HEK293 (cell line): ENCODE measurements at regions of chr14 and their contacts with region 1.

Region 1: GRCh38 chr14:61761959-61762786 is at the start of gene SNAPC1:
- H3K4me3 ChIP-seq: peak within 1 kb of the TSS; percentile 78
- H3K27ac ChIP-seq: peak within 1 kb of the TSS; percentile 68
- H3K4me1 ChIP-seq: peaks cover 12% of the 10 kb centered on the region
- CTCF ChIP-seq: no peak

Region 2: DNA sequence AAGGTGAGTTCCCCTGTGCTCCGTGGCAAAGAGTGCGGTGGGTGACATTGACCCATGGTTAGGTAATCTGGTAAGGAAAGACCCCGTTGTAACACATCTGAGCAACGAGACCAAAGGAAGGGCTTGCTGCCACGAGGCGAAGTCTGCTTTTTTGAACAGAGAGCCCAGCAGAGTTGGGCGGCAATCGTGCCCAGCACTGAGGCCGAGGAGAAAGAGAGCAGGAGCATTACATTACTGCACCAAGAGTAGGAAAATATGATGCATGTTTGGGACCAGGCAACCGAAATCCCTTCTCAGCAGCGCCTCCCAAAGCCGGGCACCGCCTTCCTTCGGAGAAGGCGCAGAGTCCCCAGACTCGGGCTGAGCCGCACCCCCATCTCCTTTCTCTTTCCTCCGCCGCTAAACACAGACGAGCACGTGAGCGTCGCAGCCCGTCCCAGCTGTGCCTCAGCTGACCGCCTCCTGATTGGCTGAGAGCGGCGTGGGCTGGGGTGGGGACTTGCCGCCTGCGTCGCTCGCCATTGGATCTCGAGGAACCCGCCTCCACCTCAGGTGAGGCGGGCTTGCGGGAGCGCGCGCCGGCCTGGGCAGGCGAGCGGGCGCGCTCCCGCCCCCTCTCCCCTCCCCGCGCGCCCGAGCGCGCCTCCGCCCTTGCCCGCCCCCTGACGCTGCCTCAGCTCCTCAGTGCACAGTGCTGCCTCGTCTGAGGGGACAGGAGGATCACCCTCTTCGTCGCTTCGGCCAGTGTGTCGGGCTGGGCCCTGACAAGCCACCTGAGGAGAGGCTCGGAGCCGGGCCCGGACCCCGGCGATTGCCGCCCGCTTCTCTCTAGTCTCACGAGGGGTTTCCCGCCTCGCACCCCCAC is 67.1 kb before region 1 on chr14 and contains the start of gene HIF1A:
- CTCF ChIA-PET with region 1: no interaction called
- POLR2A ChIA-PET with region 1: interaction called, 17 read pairs
- H3K4me3 ChIP-seq: peak within 1 kb of the TSS; percentile 93
- H3K27ac ChIP-seq: peak within 1 kb of the TSS; percentile 98
- H3K4me1 ChIP-seq: peaks cover 12% of the 10 kb centered on the region; the same call in 1 of the 2 replicates
- CTCF ChIP-seq: peak; percentile 62; the same call in 1 of the 2 replicates

Region 3: GRCh38 chr14:61750708-61751474 is 11.3 kb before region 1 on chr14:
- CTCF ChIA-PET with region 1: no interaction called
- POLR2A ChIA-PET with region 1: interaction called, 56 read pairs
- H3K4me3 ChIP-seq: peak overlapping the region; percentile 49
- H3K27ac ChIP-seq: peak overlapping the region; percentile 47; the same call in 1 of the 2 replicates
- H3K4me1 ChIP-seq: peaks cover 26% of the 10 kb centered on the region
- CTCF ChIP-seq: no peak

Region 4: GRCh38 chr14:61822458-61822857 is 60.3 kb after region 1 on chr14:
- CTCF ChIA-PET with region 1: no interaction called
- POLR2A ChIA-PET with region 1: no interaction called
- H3K4me3 ChIP-seq: no peak overlapping the region
- H3K27ac ChIP-seq: no peak overlapping the region
- H3K4me1 ChIP-seq: no peaks in the 10 kb centered on the region
- CTCF ChIP-seq: no peak